Dendritic cell treated with granulocyte-macrophage colony-stimulating factor and Interleukin-4, amounts not matched to agents 40 ng/mL and 50 ng/mL, for 4 days (primary cell): ENCODE measurements at regions of chr22 and their contacts with region 1.

Region 1: DNA sequence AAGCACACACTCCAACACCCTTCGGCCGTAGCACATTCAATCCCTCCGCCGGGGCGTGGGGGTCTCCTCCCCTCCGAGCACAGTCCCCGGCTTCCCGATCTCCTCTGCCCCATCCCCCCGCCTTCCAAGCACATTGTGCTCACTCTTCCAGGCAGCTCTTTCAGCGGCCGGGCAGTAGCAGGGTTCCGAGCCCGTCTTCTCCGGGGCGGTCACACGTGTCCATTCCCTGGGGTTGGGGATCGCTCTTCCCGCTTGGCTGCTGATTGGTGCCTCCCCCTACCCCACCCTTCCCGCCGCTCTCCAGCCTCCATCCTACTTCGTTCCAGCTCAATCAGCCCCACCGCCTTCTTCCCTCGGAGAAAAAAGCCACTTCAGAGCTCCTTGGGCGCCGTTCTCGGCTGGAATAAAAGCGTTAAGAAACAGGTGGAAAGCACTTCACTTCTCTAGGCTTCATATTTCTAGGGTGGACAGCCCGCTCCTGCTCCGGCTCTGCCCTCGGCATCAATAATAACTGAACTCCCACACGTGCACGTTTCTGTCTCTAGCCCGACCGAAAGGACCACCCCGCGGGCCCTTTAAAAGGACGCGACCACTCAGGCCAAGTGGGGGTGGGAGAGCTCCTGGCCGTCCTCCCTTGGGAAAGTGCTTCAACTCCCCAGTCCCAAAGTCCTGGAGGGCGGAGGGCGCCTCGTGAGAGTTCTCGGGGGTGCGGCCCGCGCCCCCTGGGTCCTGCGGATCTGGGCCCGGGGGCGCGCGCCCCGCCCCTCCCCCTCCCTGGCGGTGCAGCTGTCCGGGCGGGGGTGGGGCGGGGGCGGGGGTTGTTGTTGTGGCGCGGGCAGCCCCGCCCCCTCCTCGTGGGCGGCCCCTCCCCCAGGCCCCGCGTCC is 464 bp upstream of the CECR2 start:
- H3K4me3 Mint-ChIP-seq: peak overlapping the region; percentile 67
- H3K27ac Mint-ChIP-seq: peak overlapping the region; percentile 22
- H3K4me1 Mint-ChIP-seq: peaks cover 26% of the 10 kb centered on the region
- H3K27me3 Mint-ChIP-seq: peaks cover 79% of the 10 kb centered on the region

Region 2: DNA sequence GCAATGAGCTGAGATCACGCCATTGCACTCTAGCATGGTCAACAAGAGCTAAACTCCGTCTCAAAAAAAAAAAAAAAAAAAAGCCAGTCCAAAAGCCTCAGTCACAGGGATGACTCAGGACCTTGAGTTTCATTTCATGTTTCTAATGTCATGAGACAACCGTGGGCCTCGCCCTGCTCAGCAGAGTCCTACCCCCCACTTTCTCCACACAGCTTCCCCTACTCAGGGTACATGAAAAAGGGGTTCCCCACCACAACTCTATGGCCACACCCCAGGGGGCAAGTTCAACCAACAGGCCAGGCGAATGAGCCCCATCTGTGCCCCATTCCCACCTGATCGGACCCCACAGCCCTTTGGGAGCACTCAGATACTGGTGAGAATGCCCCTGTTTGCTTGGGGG is 125.3 kb before region 1 on chr22:
- intact Hi-C with region 1: no loop called
- H3K4me3 Mint-ChIP-seq: peak overlapping the region; percentile 55
- H3K27ac Mint-ChIP-seq: peak overlapping the region; percentile 97
- H3K4me1 Mint-ChIP-seq: peaks cover 78% of the 10 kb centered on the region
- H3K27me3 Mint-ChIP-seq: no peaks in the 10 kb centered on the region

Region 3: GRCh38 chr22:17477391-17477833 is 108.6 kb after region 1 on chr22:
- intact Hi-C with region 1: loop called (anchors 10 kb)
- H3K4me3 Mint-ChIP-seq: peak overlapping the region; percentile 57
- H3K27ac Mint-ChIP-seq: no peak overlapping the region
- H3K4me1 Mint-ChIP-seq: peaks cover 21% of the 10 kb centered on the region
- H3K27me3 Mint-ChIP-seq: peaks cover 3% of the 10 kb centered on the region

Region 4: GRCh38 chr22:17797721-17798559 is 429.1 kb after region 1 on chr22:
- intact Hi-C with region 1: no loop called
- H3K4me3 Mint-ChIP-seq: no peak overlapping the region
- H3K27ac Mint-ChIP-seq: peak overlapping the region; percentile 38
- H3K4me1 Mint-ChIP-seq: peaks cover 55% of the 10 kb centered on the region
- H3K27me3 Mint-ChIP-seq: peaks cover 11% of the 10 kb centered on the region